Dorsolateral prefrontal cortex (tissue), 120 donors: ENCODE measurements at regions of chr2 and their contacts with region 1.

Region 1: DNA sequence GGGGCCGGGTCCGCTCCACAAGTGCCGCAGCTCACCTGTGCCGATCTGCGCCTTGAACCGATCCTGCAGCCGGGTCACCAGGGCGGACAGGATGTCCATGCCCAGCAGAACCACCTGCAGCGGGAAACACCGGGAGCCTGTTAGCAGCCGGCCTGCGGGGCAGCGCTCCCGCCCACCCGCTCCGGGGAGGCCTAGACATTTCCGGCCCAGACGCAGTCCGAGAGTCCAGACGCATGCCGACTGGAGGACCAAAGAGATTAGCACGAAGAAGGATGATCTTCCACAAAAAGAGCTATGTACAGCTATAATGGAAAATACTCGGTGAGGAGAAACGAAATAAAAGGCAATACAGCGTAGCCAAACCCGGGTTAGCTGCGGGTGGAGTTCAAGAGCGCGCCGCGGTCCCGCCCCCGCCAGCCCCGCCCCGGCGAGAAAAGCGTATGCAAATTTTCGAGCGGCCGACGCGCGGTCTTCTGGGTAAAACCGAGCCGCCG is 421 bp upstream of the RNU4ATAC start:
- DNase-seq: peak; percentile 71 to 85 (median 80)
- H3K4me3 ChIP-seq: peak overlapping the region; percentile 54 to 99 (median 86)
- H3K27ac ChIP-seq: peak overlapping the region; percentile 91 to 100 (median 99)
- H3K27me3 ChIP-seq: no peaks in the 10 kb centered on the region
- CTCF ChIP-seq: peak in 1 of 56 donors; percentile 12

Region 2: GRCh38 chr2:121412349-121412748 is 117.9 kb before region 1 on chr2:
- intact Hi-C with region 1: no loop called
- DNase-seq: no peak
- H3K4me3 ChIP-seq: no peak overlapping the region
- H3K27ac ChIP-seq: no peak overlapping the region
- H3K27me3 ChIP-seq: no peaks in the 10 kb centered on the region
- CTCF ChIP-seq: no peak

Region 3: DNA sequence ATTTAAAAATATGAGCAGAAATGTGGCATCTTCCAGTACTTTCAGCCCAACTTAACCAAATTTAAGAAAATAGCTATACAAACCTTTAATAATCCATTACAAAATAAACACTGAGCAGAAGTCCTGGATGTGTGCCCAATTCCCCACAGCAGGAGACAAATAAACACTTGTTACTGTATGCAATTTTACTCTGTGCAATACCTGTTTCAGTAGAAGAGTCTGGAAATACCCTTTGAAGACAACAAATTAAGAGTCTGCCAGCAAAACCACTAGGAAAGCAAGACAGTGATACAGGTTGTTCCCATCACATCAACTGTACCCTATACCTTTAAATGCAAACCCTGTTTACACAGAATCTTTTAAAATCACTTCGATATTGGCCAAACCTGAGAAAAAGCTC is 41.0 kb before region 1 on chr2:
- intact Hi-C with region 1: no loop called
- DNase-seq: peak in 1 of 10 donors; percentile 66
- H3K4me3 ChIP-seq: peak overlapping the region in 58 of 59 donors; percentile 1 to 61 (median 44)
- H3K27ac ChIP-seq: peak overlapping the region in 40 of 59 donors; percentile 6 to 73 (median 53)
- H3K27me3 ChIP-seq: no peaks in the 10 kb centered on the region
- CTCF ChIP-seq: no peak

Region 4: DNA sequence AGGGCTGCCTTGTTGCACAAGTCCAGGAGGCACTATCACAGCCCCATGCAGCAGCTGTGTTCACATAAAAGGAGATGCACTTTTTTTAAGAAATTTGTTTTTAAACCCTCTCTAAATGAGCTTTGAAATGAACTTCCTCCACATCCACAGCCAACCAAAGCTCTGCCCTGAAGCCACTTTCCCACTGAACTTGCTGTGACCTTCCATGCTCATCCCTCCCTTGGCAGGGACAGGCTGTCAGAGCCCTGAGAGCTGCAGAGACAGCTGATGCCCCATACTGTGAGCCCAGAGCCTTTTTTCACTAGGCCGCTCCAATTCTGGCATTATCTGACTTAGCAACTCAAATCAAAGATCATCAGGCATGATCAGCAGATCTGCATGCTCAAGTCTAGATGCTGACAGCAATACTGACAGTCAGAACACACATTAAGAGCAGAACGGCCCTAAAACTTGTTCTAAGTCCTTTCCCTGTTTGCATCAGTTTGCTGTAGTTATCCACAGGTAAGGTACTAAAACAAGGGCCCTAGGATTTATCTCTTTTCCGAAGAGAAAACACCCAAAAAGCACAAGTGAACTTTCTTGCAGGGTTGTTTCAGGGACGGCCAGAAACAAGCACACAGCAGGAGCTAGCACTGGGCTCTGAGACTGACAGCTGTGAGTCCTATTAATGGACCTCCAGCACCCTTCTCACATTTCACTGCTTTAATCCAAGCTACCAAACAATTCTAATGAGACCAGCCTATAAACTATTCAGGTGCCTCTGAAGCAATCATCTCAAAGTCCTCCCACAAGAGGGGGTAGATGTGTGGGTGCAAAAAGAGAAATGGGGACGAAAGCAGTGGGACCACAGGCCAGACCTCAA is 35.4 kb after region 1 on chr2:
- intact Hi-C with region 1: loop called in 1 of 2 experiments (anchors 5 kb)
- DNase-seq: peak in 1 of 10 donors; percentile 25
- H3K4me3 ChIP-seq: no peak overlapping the region
- H3K27ac ChIP-seq: peak overlapping the region in 14 of 59 donors; percentile 0 to 52 (median 12)
- H3K27me3 ChIP-seq: no peaks in the 10 kb centered on the region
- CTCF ChIP-seq: no peak

Region 5: GRCh38 chr2:121617042-121617599 is 86.9 kb after region 1 on chr2:
- intact Hi-C with region 1: no loop called
- DNase-seq: no peak
- H3K4me3 ChIP-seq: no peak overlapping the region
- H3K27ac ChIP-seq: no peak overlapping the region
- H3K27me3 ChIP-seq: no peaks in the 10 kb centered on the region
- CTCF ChIP-seq: no peak

Region 6: DNA sequence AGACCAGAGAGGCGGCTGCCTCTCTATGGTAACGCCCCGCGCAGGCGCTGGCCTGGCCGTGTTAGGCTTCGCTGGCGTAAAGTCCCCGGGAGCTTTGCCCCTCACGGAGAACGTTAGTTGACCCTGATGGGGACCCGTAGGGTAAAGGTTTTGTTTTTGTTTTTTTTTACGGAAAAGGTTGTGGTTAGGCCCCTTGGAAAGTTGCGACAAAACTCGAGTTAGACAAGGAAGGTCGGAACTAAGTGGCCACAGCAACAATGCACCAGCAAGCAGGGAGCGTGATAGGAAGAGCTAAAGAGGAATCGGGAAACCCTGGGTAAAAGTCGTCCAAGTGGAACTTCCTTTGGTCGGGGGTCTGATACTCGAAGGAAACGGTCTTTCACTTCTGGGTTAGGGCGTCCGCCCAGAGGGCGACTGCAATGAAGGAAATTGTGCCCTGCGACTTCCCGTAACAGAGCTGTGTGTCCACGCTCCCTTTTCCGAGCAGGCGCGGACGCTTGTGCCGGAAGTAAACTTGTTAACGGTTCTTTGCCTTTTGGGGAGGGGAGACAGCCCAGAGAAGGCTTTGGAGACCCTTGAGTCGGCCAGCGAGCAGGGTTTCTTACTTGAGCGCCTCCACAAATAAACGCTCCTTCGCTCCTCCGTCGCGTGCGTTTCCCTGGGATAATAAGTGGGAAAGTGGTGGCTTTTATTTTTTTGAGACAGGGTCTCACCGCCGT is 119.5 kb after region 1 on chr2:
- intact Hi-C with region 1: loop called (anchors 1 kb)
- DNase-seq: peak; percentile 91 to 97 (median 96)
- H3K4me3 ChIP-seq: peak overlapping the region; percentile 56 to 98 (median 92)
- H3K27ac ChIP-seq: peak overlapping the region; percentile 87 to 100 (median 98)
- H3K27me3 ChIP-seq: no peaks in the 10 kb centered on the region
- CTCF ChIP-seq: peak in 18 of 56 donors; percentile 2 to 40 (median 12)

Region 7: DNA sequence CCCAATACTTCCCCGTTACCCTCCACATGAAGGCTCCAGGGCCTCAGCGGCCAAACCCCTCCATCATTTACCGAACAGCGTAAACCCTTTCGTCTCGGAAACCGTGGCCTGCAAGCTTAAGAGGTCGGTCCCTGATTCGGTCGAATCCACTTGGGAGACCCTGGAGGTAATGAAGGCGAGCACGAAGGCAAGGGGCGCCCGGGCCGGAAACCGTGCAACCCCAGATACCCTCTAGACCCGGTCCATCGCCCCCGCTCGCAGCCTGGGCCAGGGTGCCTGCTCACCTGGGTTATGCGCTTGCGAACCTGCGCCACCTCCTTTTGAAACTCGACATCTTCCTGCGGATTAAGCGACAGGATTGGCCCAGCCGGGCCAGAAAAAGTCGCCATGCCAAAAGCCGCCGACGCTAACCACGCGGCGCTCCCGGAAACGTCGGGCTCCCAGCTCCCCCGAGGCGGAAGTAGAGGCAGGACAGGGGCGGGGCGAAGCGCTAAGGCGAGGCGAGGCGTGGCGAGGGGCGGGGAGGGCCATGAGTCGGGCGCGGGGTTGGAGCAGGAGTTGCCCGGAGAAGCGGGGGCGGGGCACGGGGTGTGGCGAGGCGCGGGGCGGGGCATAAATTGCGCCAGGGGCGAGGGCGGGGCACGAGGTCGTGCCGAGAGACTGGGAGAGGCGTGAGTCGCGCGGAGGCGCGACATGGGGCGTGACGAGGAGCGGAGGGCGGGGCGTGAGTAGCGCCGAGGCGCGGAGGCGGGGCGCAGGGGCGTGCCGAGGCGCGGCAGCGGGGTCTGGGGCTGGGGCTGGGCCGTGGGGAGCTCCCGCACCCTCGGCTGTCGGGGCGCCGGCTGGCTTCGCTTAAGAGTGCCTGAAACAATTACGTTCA is 206.4 kb after region 1 on chr2 and contains the start of gene NIFK:
- intact Hi-C with region 1: loop called (anchors 5 kb)
- DNase-seq: peak; percentile 96 to 99 (median 98)
- H3K4me3 ChIP-seq: peak within 1 kb of the TSS; percentile 51 to 97 (median 90)
- H3K27ac ChIP-seq: peak within 1 kb of the TSS in 56 of 59 donors; percentile 7 to 89 (median 76)
- H3K27me3 ChIP-seq: no peaks in the 10 kb centered on the region
- CTCF ChIP-seq: peak in 19 of 56 donors; percentile 0 to 42 (median 17)
- total RNA-seq, gene NIFK: 16.8 to 47.3 (median 29.2) TPM

Region 8: DNA sequence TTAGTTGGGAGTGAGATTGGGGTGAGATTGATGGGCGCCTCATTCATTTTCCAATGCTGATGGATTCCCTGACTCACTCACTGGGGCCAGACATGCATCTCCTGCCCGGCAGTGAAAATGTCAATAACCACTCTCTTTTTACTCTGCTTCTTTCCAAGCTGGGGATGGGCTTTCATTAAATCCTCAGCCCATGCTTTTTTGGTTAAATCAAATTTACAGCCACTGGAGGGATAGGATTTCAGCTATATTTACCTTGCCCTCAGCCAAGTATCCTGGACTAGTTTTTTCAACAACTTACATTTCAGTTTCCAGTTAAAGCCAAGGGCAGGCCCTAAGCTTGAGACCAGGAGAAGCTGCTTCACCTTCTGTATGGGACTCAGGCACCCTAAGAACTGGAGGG is 388.0 kb after region 1 on chr2:
- intact Hi-C with region 1: no loop called
- DNase-seq: no peak
- H3K4me3 ChIP-seq: no peak overlapping the region
- H3K27ac ChIP-seq: no peak overlapping the region
- H3K27me3 ChIP-seq: no peaks in the 10 kb centered on the region
- CTCF ChIP-seq: no peak